Right ventricle myocardium superior (tissue), 1 donor: ENCODE measurements at regions of chr20 and their contacts with region 1.

Region 1: GRCh38 chr20:24992487-24993205 is at the start of gene APMAP:
- DNase-seq: peak; percentile 99
- ATAC-seq: peak; percentile 95
- total RNA-seq, gene APMAP: 23.2 TPM

Region 2: DNA sequence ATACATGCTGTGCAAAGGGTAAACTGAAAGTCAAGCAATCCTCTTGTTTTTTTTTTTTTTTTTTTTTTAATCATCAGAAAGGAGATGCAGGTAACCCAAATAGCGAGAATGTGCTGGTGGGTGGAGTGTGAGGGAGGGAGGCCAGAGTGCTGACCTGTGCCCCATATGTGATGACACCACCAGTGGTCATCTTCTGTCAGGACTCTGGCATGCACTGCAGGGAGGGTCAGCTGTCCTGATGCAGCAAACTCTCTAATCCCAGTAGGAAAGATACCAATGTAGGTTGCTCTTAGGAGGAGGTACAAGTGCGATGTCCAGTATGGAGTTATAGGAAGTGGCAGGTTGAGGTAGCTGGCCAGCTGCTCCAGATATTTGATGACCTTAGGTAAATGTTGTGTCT is 1301.0 kb before region 1 on chr20:
- intact Hi-C with region 1: no loop called
- DNase-seq: no peak
- ATAC-seq: no peak

Region 3: DNA sequence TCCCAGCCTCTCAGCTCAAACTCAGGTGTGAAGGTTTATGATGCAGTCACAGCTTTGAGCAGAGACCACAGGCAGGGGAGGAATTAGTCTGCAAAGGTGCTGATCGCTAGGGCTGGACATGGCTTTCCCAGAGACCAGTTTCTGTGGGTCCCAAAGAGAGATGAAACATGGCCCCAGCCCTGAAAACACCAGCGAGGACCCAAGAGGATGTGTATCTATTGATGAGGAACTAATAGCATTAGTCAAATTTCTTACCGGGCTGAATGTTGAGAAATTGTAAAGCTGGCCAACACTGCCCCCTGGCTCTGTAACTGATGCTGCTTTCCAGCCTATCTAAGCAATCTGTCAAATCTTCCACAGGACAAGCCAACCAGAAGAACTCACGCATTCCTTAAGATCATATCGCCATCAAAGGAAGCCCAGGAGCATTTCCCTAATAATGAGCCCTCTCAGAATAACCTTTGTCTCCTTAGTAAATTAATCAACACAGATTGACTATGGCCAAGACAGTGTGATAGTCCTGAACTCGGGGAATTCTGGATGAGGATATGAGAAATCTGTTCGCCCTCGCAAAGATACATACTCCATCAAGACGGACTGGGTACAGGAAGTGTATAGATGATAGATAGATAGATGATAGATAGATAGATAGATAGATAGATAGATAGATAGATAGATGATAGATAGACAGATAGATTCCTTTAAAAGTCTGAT is 73.1 kb after region 1 on chr20:
- intact Hi-C with region 1: loop called (anchors 1 kb)
- DNase-seq: peak; percentile 75
- ATAC-seq: peak; percentile 88

Region 4: DNA sequence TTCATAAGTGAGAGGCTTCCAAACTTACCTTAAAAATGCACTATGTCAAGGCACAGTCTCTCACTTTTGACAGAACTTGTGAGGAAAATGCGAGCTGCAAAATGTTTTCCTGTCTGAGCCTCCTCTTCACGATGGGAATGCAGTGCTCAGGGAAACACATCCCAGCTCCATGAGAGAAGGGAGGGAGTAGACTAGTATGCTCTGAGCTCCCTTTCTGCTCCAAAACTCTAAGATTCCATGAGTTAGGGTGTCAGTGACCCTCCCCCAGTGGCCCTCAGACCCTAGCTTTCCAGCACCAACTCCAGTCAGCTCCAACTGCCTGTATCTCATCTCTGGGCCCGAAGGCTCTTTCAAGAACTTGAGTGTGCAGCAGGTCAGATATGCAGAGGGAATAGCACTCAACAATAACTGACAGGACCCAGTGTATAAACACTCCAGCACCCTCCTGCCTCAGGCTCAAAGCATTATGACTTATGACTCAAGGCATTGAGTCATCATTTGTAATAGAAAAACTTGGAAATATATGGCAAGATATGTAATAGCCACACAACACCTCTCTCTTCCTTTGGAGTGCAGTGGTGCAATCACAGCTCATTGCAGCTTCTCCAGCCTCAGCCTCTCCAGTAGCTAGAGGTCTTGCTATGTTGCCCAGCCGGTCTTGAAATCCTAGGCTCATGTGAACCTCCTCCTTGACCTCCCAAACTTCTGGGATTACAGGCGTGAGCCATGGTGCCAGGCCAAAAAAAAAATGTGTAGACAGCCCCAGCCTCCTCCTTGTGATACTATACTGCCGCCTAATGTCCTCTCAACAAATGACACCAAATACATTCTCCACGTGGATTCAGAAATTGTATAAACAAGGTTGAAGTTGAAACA is 186.2 kb after region 1 on chr20:
- intact Hi-C with region 1: loop called (anchors 2 kb)
- DNase-seq: no peak
- ATAC-seq: peak; percentile 94

Region 5: GRCh38 chr20:25195014-25195961 is 202.6 kb after region 1 on chr20 and contains the start of gene ENTPD6:
- intact Hi-C with region 1: loop called (anchors 5 kb)
- DNase-seq: peak; percentile 96
- ATAC-seq: peak; percentile 88
- total RNA-seq, gene ENTPD6: 118 TPM